ENCODE measurements at regions of chr2 and their contacts with region 1.

Region 1: GRCh38 chr2:119759451-119760236 is at the start of gene PTPN4:
- DNase-seq: peak; percentile 99
- ATAC-seq: peak; percentile 87
- H3K4me3 ChIP-seq: peak within 1 kb of the TSS; percentile 77 to 96 (median 88)
- H3K4me3 Mint-ChIP-seq: peak within 1 kb of the TSS; percentile 96
- H3K27ac ChIP-seq: peak within 1 kb of the TSS; percentile 73 to 84
- H3K27ac Mint-ChIP-seq: peak within 1 kb of the TSS; percentile 95
- H3K4me1 ChIP-seq: peaks cover 16 to 28% of the 10 kb centered on the region in 2 donors
- H3K4me1 Mint-ChIP-seq: peaks cover 42% of the 10 kb centered on the region
- H3K27me3 ChIP-seq: no peaks in the 10 kb centered on the region
- H3K27me3 Mint-ChIP-seq: no peaks in the 10 kb centered on the region
- CTCF ChIP-seq: no peak
- total RNA-seq, gene PTPN4: 54.8 and 66.4 TPM in 2 replicates

Region 2: GRCh38 chr2:119366649-119367471 is 392.8 kb before region 1 on chr2 and contains the starts of genes C2orf76 and DBI:
- CTCF ChIA-PET with region 1: no interaction called
- POLR2A ChIA-PET with region 1: no interaction called
- intact Hi-C with region 1: loop called (anchors 1 kb)
- DNase-seq: peak; percentile 95
- ATAC-seq: peak; percentile 96
- H3K4me3 ChIP-seq: peak within 1 kb of the TSS; percentile 77 to 100 (median 94)
- H3K4me3 Mint-ChIP-seq: peak within 1 kb of the TSS; percentile 99
- H3K27ac ChIP-seq: peak within 1 kb of the TSS; percentile 84 to 91
- H3K27ac Mint-ChIP-seq: peak within 1 kb of the TSS; percentile 92
- H3K4me1 ChIP-seq: peaks cover 26 to 44% of the 10 kb centered on the region in 2 donors
- H3K4me1 Mint-ChIP-seq: peaks cover 57% of the 10 kb centered on the region
- H3K27me3 ChIP-seq: no peaks in the 10 kb centered on the region
- H3K27me3 Mint-ChIP-seq: no peaks in the 10 kb centered on the region
- CTCF ChIP-seq: no peak
- total RNA-seq, gene C2orf76: 11.5 and 13.6 TPM in 2 replicates
- total RNA-seq, gene DBI: 40.3 and 45.2 TPM in 2 replicates

Region 3: GRCh38 chr2:119795309-119796303 is 36.0 kb after region 1 on chr2:
- CTCF ChIA-PET with region 1: no interaction called
- POLR2A ChIA-PET with region 1: no interaction called
- intact Hi-C with region 1: no loop called
- DNase-seq: no peak
- ATAC-seq: no peak
- H3K4me3 ChIP-seq: no peak overlapping the region
- H3K4me3 Mint-ChIP-seq: no peak overlapping the region
- H3K27ac ChIP-seq: no peak overlapping the region
- H3K27ac Mint-ChIP-seq: no peak overlapping the region
- H3K4me1 ChIP-seq: no peaks in the 10 kb centered on the region
- H3K4me1 Mint-ChIP-seq: peaks cover 16% of the 10 kb centered on the region
- H3K27me3 ChIP-seq: no peaks in the 10 kb centered on the region
- H3K27me3 Mint-ChIP-seq: no peaks in the 10 kb centered on the region
- CTCF ChIP-seq: no peak

Region 4: GRCh38 chr2:120012771-120013596 is 253.3 kb after region 1 on chr2 and contains the start of gene EPB41L5:
- CTCF ChIA-PET with region 1: no interaction called
- POLR2A ChIA-PET with region 1: no interaction called
- intact Hi-C with region 1: loop called (anchors 1 kb)
- DNase-seq: peak; percentile 87
- ATAC-seq: peak; percentile 90
- H3K4me3 ChIP-seq: peak within 1 kb of the TSS; percentile 65 to 88 (median 77)
- H3K4me3 Mint-ChIP-seq: peak within 1 kb of the TSS; percentile 91
- H3K27ac ChIP-seq: peak within 1 kb of the TSS; percentile 58 to 80
- H3K27ac Mint-ChIP-seq: peak within 1 kb of the TSS; percentile 69
- H3K4me1 ChIP-seq: peaks cover 11 to 12% of the 10 kb centered on the region in 2 donors
- H3K4me1 Mint-ChIP-seq: peaks cover 30% of the 10 kb centered on the region
- H3K27me3 ChIP-seq: no peaks in the 10 kb centered on the region
- H3K27me3 Mint-ChIP-seq: no peaks in the 10 kb centered on the region
- CTCF ChIP-seq: no peak
- total RNA-seq, gene EPB41L5: 14.0 and 15.0 TPM in 2 replicates

Region 5: DNA sequence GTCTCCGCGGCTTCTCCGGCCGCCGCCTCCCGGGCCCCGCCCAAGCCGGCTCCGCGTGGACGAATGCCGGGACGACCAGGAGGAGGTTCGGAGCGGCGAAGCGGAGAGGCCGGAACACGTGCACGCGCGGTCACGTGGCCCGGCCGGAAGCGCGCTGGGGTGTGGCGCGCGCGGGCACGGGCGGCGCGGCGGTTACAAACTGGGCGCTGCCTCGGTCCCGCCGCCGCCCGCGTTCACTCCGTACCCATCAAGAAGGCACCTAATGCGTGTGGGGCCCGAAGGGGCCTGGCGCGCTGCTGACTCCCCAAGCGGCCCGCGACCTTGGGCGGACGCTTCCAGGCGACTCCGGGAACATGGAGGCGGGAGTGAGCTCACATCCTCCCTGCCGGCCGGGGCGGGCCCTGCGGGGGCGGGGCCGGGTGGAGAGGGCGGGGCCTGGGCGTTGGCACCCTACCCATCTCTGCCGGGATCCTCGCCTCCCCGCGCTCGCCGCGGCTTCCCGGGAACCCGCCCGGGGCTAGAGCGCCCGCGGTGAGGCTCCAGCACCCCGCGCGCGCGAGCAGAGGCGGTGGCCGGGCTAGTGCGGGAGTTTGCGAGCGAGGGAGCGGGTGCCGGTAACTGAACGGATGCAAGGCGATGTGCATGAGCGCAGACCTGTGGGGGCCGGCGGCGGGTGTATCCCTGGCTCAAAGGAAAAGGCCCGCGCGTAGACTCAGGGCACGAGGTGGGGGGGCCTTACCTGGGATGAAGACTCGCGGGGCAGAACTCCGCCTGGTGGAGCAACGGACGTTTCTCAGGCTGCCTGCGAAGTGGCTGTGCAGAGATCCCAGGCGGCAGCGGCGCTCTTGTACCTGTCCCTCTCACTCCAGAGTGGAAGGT is 463.6 kb after region 1 on chr2 and contains the start of gene TMEM185B:
- CTCF ChIA-PET with region 1: no interaction called
- POLR2A ChIA-PET with region 1: no interaction called
- intact Hi-C with region 1: loop called (anchors 1 kb)
- DNase-seq: peak; percentile 93
- ATAC-seq: peak; percentile 96
- H3K4me3 ChIP-seq: peak within 1 kb of the TSS; percentile 68 to 83 (median 71)
- H3K4me3 Mint-ChIP-seq: peak within 1 kb of the TSS; percentile 89
- H3K27ac ChIP-seq: peak within 1 kb of the TSS; percentile 93 to 96
- H3K27ac Mint-ChIP-seq: peak within 1 kb of the TSS; percentile 95
- H3K4me1 ChIP-seq: peaks cover 25 to 31% of the 10 kb centered on the region in 2 donors
- H3K4me1 Mint-ChIP-seq: peaks cover 55% of the 10 kb centered on the region
- H3K27me3 ChIP-seq: no peaks in the 10 kb centered on the region
- H3K27me3 Mint-ChIP-seq: no peaks in the 10 kb centered on the region
- CTCF ChIP-seq: peak; percentile 38
- total RNA-seq, gene TMEM185B: 29.6 TPM in 2 replicates

Region 6: DNA sequence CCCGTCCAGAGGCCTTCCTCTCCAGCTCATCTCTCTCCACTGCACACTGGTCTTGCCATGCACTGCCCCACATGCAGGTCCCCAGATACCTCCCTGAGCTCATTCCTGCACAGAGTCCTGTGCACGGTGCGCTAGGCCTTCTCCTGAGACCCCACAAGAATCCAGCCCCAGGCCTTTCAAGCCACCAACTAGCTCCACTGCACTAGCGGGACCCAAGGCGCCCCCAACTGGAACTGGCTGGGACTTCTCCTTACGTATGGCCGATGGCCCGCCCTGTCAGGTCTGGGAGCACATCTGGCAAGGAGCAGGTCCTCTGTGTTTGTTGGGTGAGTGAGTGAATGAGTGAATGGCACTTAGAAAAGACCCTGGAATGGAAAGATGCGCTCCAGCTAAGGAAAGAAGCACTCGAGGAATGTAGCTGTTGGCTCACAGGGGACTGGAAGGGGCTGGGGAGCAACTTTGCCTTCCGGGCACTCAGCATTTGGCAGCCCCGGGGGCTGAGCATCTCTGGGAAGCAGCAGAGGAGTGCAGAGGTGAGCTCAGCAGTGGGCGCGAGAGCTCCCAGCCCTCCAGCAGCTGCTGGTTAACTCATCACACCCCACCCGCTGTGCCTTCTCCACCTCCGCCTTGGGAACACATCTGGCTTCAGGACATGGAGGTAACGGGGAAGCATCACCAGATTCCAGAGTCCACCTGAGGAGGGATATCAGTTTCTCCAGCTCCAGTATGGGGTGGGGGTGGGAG is 1199.2 kb after region 1 on chr2:
- CTCF ChIA-PET with region 1: no interaction called
- POLR2A ChIA-PET with region 1: no interaction called
- intact Hi-C with region 1: no loop called
- DNase-seq: no peak
- ATAC-seq: no peak
- H3K4me3 ChIP-seq: no peak overlapping the region
- H3K4me3 Mint-ChIP-seq: no peak overlapping the region
- H3K27ac ChIP-seq: no peak overlapping the region
- H3K27ac Mint-ChIP-seq: no peak overlapping the region
- H3K4me1 ChIP-seq: no peaks in the 10 kb centered on the region
- H3K4me1 Mint-ChIP-seq: no peaks in the 10 kb centered on the region
- H3K27me3 ChIP-seq: no peaks in the 10 kb centered on the region
- H3K27me3 Mint-ChIP-seq: no peaks in the 10 kb centered on the region
- CTCF ChIP-seq: no peak

Region 7: DNA sequence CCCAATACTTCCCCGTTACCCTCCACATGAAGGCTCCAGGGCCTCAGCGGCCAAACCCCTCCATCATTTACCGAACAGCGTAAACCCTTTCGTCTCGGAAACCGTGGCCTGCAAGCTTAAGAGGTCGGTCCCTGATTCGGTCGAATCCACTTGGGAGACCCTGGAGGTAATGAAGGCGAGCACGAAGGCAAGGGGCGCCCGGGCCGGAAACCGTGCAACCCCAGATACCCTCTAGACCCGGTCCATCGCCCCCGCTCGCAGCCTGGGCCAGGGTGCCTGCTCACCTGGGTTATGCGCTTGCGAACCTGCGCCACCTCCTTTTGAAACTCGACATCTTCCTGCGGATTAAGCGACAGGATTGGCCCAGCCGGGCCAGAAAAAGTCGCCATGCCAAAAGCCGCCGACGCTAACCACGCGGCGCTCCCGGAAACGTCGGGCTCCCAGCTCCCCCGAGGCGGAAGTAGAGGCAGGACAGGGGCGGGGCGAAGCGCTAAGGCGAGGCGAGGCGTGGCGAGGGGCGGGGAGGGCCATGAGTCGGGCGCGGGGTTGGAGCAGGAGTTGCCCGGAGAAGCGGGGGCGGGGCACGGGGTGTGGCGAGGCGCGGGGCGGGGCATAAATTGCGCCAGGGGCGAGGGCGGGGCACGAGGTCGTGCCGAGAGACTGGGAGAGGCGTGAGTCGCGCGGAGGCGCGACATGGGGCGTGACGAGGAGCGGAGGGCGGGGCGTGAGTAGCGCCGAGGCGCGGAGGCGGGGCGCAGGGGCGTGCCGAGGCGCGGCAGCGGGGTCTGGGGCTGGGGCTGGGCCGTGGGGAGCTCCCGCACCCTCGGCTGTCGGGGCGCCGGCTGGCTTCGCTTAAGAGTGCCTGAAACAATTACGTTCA is 1977.1 kb after region 1 on chr2 and contains the start of gene NIFK:
- CTCF ChIA-PET with region 1: no interaction called
- POLR2A ChIA-PET with region 1: no interaction called
- intact Hi-C with region 1: loop called (anchors 5 kb)
- DNase-seq: peak; percentile 99
- ATAC-seq: peak; percentile 95
- H3K4me3 ChIP-seq: peak within 1 kb of the TSS; percentile 84 to 99 (median 98)
- H3K4me3 Mint-ChIP-seq: peak within 1 kb of the TSS; percentile 97
- H3K27ac ChIP-seq: peak within 1 kb of the TSS; percentile 59 to 92
- H3K27ac Mint-ChIP-seq: peak within 1 kb of the TSS; percentile 93
- H3K4me1 ChIP-seq: peaks cover 14 to 20% of the 10 kb centered on the region in 2 donors
- H3K4me1 Mint-ChIP-seq: peaks cover 19% of the 10 kb centered on the region
- H3K27me3 ChIP-seq: no peaks in the 10 kb centered on the region
- H3K27me3 Mint-ChIP-seq: no peaks in the 10 kb centered on the region
- CTCF ChIP-seq: no peak
- total RNA-seq, gene NIFK: 55.3 and 56.3 TPM in 2 replicates